ENCODE measurements at regions of chr17 and their contacts with region 1.

Region 1: DNA sequence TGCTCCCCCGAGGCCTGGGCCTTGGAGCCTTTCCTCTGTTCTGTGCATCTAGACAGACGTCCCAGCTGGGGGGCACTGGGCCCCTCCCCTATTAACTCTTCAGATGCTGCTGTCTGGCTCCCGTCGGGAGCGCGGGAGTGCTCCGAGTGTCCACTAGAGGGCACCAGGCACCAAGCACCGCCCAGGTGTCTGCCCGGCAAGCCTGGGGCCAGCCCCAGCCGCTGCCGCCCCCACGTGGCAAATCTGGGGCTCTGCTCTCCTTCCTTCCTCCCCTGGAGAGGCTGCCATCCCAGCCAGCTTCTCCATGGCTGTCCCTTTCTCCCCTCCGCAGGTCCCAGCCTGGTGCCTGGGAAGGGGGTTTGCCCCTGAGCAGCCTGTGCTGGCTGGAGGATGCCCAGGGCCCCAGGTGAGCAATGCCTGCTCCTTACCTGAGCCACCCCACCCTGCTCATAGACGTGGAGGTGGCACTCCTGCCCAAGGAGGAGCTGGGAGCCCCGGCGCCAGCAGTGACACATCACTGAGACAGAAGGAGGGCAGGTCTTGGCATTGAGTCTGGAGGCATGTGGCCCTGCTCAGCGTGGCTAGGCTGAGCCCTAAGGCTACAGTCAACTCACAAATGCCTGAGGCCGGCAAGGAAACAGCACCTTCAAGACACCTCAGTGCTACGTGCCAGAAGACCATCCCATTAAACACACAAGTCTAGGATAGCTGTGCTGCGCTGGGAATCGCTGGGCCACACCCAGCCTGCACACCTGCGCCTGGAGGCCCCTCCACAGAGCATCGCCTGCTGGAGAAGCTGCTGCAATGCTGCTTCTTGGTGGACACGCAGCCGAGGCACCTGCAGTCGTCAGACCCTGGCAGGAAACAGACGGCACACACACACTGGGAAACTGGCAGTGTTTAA is 19.7 kb downstream of the TMEM235 start:
- DNase-seq: peak; percentile 73 to 92 (median 84)
- ATAC-seq: peak; percentile 35
- H3K4me3 ChIP-seq: peak overlapping the region; percentile 52
- H3K4me3 Mint-ChIP-seq: peak overlapping the region; percentile 96
- H3K27ac ChIP-seq: peak overlapping the region; percentile 22 to 84
- H3K27ac Mint-ChIP-seq: peak overlapping the region; percentile 98
- H3K4me1 ChIP-seq: peaks cover 72% of the 10 kb centered on the region
- H3K4me1 Mint-ChIP-seq: peaks cover 51% of the 10 kb centered on the region
- H3K27me3 ChIP-seq: no peaks in the 10 kb centered on the region
- H3K27me3 Mint-ChIP-seq: no peaks in the 10 kb centered on the region
- CTCF ChIP-seq: peak; percentile 100

Region 2: GRCh38 chr17:78112518-78113226 is 138.5 kb before region 1 on chr17:
- CTCF ChIA-PET with region 1: interaction called, 8 read pairs
- POLR2A ChIA-PET with region 1: interaction called, 4 read pairs
- intact Hi-C with region 1: loop called in 1 of 2 experiments (anchors 2 kb)
- DNase-seq: peak; percentile 55 to 87 (median 77)
- ATAC-seq: peak; percentile 73
- H3K4me3 ChIP-seq: no peak overlapping the region
- H3K4me3 Mint-ChIP-seq: no peak overlapping the region
- H3K27ac ChIP-seq: peak overlapping the region; percentile 7 to 46
- H3K27ac Mint-ChIP-seq: peak overlapping the region; percentile 84
- H3K4me1 ChIP-seq: peaks cover 72% of the 10 kb centered on the region
- H3K4me1 Mint-ChIP-seq: peaks cover 36% of the 10 kb centered on the region
- H3K27me3 ChIP-seq: no peaks in the 10 kb centered on the region
- H3K27me3 Mint-ChIP-seq: no peaks in the 10 kb centered on the region
- CTCF ChIP-seq: peak; percentile 100

Region 3: GRCh38 chr17:78204387-78205123 is 46.6 kb before region 1 on chr17:
- CTCF ChIA-PET with region 1: no interaction called
- POLR2A ChIA-PET with region 1: no interaction called
- intact Hi-C with region 1: no loop called
- DNase-seq: no peak
- ATAC-seq: no peak
- H3K4me3 ChIP-seq: no peak overlapping the region
- H3K4me3 Mint-ChIP-seq: no peak overlapping the region
- H3K27ac ChIP-seq: no peak overlapping the region
- H3K27ac Mint-ChIP-seq: no peak overlapping the region
- H3K4me1 ChIP-seq: peaks cover 1% of the 10 kb centered on the region
- H3K4me1 Mint-ChIP-seq: no peaks in the 10 kb centered on the region
- H3K27me3 ChIP-seq: no peaks in the 10 kb centered on the region
- H3K27me3 Mint-ChIP-seq: no peaks in the 10 kb centered on the region
- CTCF ChIP-seq: no peak

Region 4: GRCh38 chr17:78214706-78215061 is 36.5 kb before region 1 on chr17:
- CTCF ChIA-PET with region 1: interaction called, 3 read pairs
- POLR2A ChIA-PET with region 1: no interaction called
- intact Hi-C with region 1: loop called in 1 of 2 experiments (anchors 1 kb)
- DNase-seq: no peak
- ATAC-seq: no peak
- H3K4me3 ChIP-seq: peak overlapping the region; percentile 58
- H3K4me3 Mint-ChIP-seq: no peak overlapping the region
- H3K27ac ChIP-seq: no peak overlapping the region
- H3K27ac Mint-ChIP-seq: no peak overlapping the region
- H3K4me1 ChIP-seq: peaks cover 13% of the 10 kb centered on the region
- H3K4me1 Mint-ChIP-seq: no peaks in the 10 kb centered on the region
- H3K27me3 ChIP-seq: no peaks in the 10 kb centered on the region
- H3K27me3 Mint-ChIP-seq: no peaks in the 10 kb centered on the region
- CTCF ChIP-seq: no peak

Region 5: GRCh38 chr17:78313735-78314648 is 62.8 kb after region 1 on chr17:
- CTCF ChIA-PET with region 1: interaction called, 3 read pairs
- POLR2A ChIA-PET with region 1: interaction called, 14 read pairs
- intact Hi-C with region 1: no loop called
- DNase-seq: peak; percentile 29 to 88 (median 72)
- ATAC-seq: peak; percentile 79
- H3K4me3 ChIP-seq: peak overlapping the region; percentile 26
- H3K4me3 Mint-ChIP-seq: peak overlapping the region; percentile 86
- H3K27ac ChIP-seq: no peak overlapping the region
- H3K27ac Mint-ChIP-seq: peak overlapping the region; percentile 74
- H3K4me1 ChIP-seq: peaks cover 55% of the 10 kb centered on the region
- H3K4me1 Mint-ChIP-seq: peaks cover 48% of the 10 kb centered on the region
- H3K27me3 ChIP-seq: no peaks in the 10 kb centered on the region
- H3K27me3 Mint-ChIP-seq: no peaks in the 10 kb centered on the region
- CTCF ChIP-seq: no peak

Region 6: DNA sequence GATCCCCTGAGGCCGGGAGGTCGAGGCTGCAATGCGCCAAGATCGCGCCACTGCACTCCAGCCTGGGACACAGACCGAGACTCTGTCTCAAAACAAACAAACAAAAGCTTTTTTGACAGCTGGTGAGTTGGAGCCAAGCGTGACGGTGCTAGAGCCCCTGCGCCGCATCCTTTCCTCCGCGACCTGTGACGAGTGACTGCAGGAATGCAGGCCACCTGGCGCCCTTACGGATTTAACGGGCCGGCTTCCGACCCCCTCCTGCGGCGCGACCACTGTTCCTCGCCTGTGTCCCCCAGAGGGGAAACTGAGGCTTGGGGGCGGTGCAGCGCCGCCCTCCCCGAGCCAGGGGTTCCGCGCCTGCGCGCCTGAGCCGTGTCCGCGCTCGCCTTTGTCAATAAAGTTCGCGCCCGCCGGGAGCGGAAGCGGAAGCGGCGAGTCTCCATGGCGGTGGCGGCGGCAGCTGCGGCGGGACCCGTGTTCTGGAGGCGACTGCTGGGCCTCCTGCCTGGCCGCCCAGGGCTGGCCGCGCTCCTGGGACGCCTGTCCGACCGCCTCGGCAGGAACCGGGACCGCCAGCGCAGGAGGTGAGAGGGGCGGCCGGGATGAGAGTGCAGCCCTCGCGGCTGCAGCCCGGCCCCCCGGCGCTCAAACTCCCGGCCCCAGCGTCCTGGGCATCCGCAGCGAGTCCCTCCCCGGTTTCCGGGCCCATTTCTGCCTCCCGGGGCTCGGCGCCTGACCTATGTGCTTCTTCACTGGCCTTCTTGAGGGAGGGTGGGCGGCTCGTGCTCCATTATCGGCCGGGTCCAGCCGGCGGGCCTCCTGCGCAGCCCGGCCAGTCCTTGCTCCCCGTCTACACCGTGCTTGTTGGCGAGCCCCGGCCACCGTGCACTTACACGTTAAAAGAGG is 127.3 kb after region 1 on chr17 and contains the start of gene PGS1:
- CTCF ChIA-PET with region 1: interaction called, 7 read pairs
- POLR2A ChIA-PET with region 1: interaction called, 4 read pairs
- intact Hi-C with region 1: loop called in 1 of 2 experiments (anchors 5 kb)
- DNase-seq: peak; percentile 67 to 90 (median 80)
- ATAC-seq: peak; percentile 51
- H3K4me3 ChIP-seq: peak within 1 kb of the TSS; percentile 79
- H3K4me3 Mint-ChIP-seq: peak within 1 kb of the TSS; percentile 96
- H3K27ac ChIP-seq: peak within 1 kb of the TSS; percentile 51 to 63
- H3K27ac Mint-ChIP-seq: peak within 1 kb of the TSS; percentile 75
- H3K4me1 ChIP-seq: peaks cover 50% of the 10 kb centered on the region
- H3K4me1 Mint-ChIP-seq: peaks cover 36% of the 10 kb centered on the region
- H3K27me3 ChIP-seq: no peaks in the 10 kb centered on the region
- H3K27me3 Mint-ChIP-seq: no peaks in the 10 kb centered on the region
- CTCF ChIP-seq: no peak
- total RNA-seq, gene PGS1: 40.9 to 45.3 TPM

Region 7: GRCh38 chr17:78840725-78841611 is 589.8 kb after region 1 on chr17 and contains the start of gene USP36:
- CTCF ChIA-PET with region 1: no interaction called
- POLR2A ChIA-PET with region 1: no interaction called
- intact Hi-C with region 1: loop called in 1 of 2 experiments (anchors 10 kb)
- DNase-seq: peak; percentile 99 to 100 (median 100)
- ATAC-seq: peak; percentile 80
- H3K4me3 ChIP-seq: peak within 1 kb of the TSS; percentile 91
- H3K4me3 Mint-ChIP-seq: peak within 1 kb of the TSS; percentile 99
- H3K27ac ChIP-seq: peak within 1 kb of the TSS; percentile 96 to 99
- H3K27ac Mint-ChIP-seq: peak within 1 kb of the TSS; percentile 93
- H3K4me1 ChIP-seq: peaks cover 52% of the 10 kb centered on the region
- H3K4me1 Mint-ChIP-seq: peaks cover 56% of the 10 kb centered on the region
- H3K27me3 ChIP-seq: no peaks in the 10 kb centered on the region
- H3K27me3 Mint-ChIP-seq: no peaks in the 10 kb centered on the region
- CTCF ChIP-seq: peak; percentile 44
- total RNA-seq, gene USP36: 489 to 494 TPM

Measured in CD4-positive, alpha-beta T cell (primary cell).